HepG2 (cell line): ENCODE measurements at regions of chr18 and their contacts with region 1.

Region 1: GRCh38 chr18:36186911-36187834 is at the start of gene MOCOS:
- DNase-seq: peak; percentile 68
- ATAC-seq: peak; percentile 91
- H3K4me3 ChIP-seq: peak within 1 kb of the TSS; percentile 79 to 86 (median 81)
- H3K27ac ChIP-seq: peak within 1 kb of the TSS; percentile 72
- H3K4me1 ChIP-seq: peaks cover 63% of the 10 kb centered on the region
- H3K27me3 ChIP-seq: no peaks in the 10 kb centered on the region; a peak in 1 of 5 replicates
- CTCF ChIP-seq: peak; percentile 39
- EP300 ChIP-seq: peak in 1 of 2 experiments; percentile 17; a peak in 1 of 4 replicates
- POLR2A ChIP-seq: peak; percentile 83 to 86
- RAD21 ChIP-seq: peak; percentile 69; the same call in 1 of the 2 replicates
- total RNA-seq, gene MOCOS: 15.4 and 20.0 TPM in 2 replicates

Region 2: DNA sequence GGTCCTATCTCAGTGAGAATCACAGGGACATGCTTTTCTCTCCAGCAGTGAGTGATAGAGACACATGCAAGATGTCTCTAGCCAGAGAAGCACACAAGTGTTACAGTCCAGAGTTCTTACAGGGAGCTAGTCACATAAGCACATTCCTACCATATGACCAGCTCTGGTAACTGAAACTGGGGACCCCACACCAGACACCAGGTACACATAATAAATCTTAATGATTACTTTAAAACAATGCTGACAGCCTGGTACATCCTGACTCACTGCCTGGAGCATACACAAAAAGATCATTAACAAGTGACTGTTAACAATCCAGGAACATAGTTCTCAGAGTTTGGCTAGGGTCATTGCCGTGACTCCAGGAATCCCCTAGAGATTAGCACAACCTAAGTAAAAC is 552.0 kb before region 1 on chr18:
- CTCF ChIA-PET with region 1: no interaction called
- POLR2A ChIA-PET with region 1: no interaction called
- in situ Hi-C with region 1: no loop called
- intact Hi-C with region 1: no loop called
- DNase-seq: peak; percentile 4
- ATAC-seq: no peak
- H3K4me3 ChIP-seq: no peak overlapping the region
- H3K27ac ChIP-seq: no peak overlapping the region
- H3K4me1 ChIP-seq: no peaks in the 10 kb centered on the region
- H3K27me3 ChIP-seq: no peaks in the 10 kb centered on the region
- CTCF ChIP-seq: no peak
- EP300 ChIP-seq: no peak
- POLR2A ChIP-seq: no peak
- RAD21 ChIP-seq: no peak

Region 3: DNA sequence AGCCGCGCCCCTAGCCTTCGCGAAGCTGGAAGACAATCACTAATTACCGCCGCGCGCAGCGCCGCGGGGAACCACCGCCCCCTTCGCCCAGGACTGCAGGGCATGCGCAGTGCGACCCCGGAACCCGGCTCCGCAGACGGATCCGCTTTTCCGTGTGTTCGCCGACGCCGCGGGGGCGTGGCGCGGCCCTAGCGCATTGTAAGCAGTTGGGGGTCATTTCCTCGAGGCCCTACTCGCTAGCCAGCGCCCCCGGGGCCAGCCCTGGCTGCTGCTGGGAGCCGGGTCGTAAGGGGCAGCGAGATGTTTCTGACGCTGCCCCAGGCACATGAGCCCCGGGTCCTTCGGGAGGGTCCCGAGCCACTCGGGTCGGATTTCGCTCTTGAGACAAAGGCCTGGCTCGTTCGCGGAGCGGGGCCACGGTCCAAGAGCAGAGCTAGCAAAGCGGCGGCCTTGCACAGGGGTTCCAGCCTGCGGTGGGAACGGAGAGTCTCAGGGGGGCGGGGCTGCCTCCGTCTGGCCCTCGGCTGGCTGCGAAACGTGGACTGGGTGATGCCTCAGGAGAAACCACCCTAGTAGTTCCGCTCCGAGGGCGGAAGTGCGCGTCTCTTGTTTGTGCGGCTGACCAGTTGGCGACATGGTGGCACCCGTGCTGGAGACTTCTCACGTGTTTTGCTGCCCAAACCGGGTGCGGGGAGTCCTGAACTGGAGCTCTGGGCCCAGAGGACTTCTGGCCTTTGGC is 57.7 kb before region 1 on chr18 and contains the starts of genes ELP2 and SLC39A6:
- CTCF ChIA-PET with region 1: no interaction called
- POLR2A ChIA-PET with region 1: interaction called, 42 read pairs
- in situ Hi-C with region 1: no loop called
- intact Hi-C with region 1: loop called (anchors 2 kb)
- DNase-seq: peak; percentile 91
- ATAC-seq: peak; percentile 95
- H3K4me3 ChIP-seq: peak within 1 kb of the TSS; percentile 83 to 87 (median 87)
- H3K27ac ChIP-seq: peak within 1 kb of the TSS; percentile 98
- H3K4me1 ChIP-seq: peaks cover 56% of the 10 kb centered on the region
- H3K27me3 ChIP-seq: no peaks in the 10 kb centered on the region; a peak in 1 of 5 replicates
- CTCF ChIP-seq: no peak
- EP300 ChIP-seq: no peak; a peak in 1 of 4 replicates
- POLR2A ChIP-seq: peak; percentile 91 to 97
- RAD21 ChIP-seq: no peak; the same call in 1 of the 2 replicates
- total RNA-seq, gene ELP2: 100 and 121 TPM in 2 replicates
- total RNA-seq, gene SLC39A6: 30.6 and 41.7 TPM in 2 replicates

Region 4: GRCh38 chr18:36176710-36177109 is 10.5 kb before region 1 on chr18:
- CTCF ChIA-PET with region 1: no interaction called
- POLR2A ChIA-PET with region 1: interaction called, 103 read pairs
- in situ Hi-C with region 1: no loop called
- intact Hi-C with region 1: no loop called
- DNase-seq: no peak
- ATAC-seq: peak; percentile 13
- H3K4me3 ChIP-seq: no peak overlapping the region
- H3K27ac ChIP-seq: peak overlapping the region; percentile 87
- H3K4me1 ChIP-seq: peaks cover 78% of the 10 kb centered on the region
- H3K27me3 ChIP-seq: no peaks in the 10 kb centered on the region; a peak in 1 of 5 replicates
- CTCF ChIP-seq: no peak
- EP300 ChIP-seq: no peak
- POLR2A ChIP-seq: no peak
- RAD21 ChIP-seq: no peak

Region 5: DNA sequence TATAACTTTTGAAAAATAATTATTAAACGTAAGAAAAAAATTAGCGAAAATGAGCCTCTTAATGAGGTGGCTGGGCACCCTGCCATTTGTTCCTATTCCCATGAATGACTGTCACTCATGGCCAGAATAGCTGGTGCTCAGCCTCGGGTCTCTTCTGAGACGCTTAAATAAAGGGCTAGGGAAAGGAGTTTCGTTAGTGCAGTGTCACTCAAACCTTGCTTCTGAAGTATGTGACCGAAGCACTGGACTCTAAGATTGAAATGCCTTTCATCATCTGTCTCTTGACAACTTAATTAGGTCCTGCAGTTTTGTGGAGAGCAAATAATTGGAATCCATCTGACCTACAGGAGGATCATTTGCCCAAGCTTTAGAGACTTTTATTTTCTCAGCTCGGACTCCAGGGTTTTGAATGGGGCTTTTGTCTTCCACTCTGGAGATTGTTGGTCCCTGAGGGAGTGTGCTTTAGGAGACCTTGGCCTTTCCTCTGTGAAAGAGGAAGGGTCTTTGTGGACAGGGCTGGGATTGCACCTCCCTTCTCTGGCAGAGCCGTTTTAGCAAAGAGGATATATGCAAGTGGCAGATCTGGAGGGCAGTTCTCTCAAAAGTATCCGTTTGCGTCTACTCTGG is 68.0 kb after region 1 on chr18:
- CTCF ChIA-PET with region 1: no interaction called
- POLR2A ChIA-PET with region 1: no interaction called
- in situ Hi-C with region 1: no loop called
- intact Hi-C with region 1: loop called (anchors 10 kb)
- DNase-seq: peak; percentile 84
- ATAC-seq: peak; percentile 99
- H3K4me3 ChIP-seq: peak overlapping the region in 1 of 3 experiments; percentile 8; a peak in 1 of 6 replicates
- H3K27ac ChIP-seq: peak overlapping the region; percentile 60
- H3K4me1 ChIP-seq: peaks cover 27% of the 10 kb centered on the region
- H3K27me3 ChIP-seq: no peaks in the 10 kb centered on the region
- CTCF ChIP-seq: no peak
- EP300 ChIP-seq: no peak
- POLR2A ChIP-seq: no peak
- RAD21 ChIP-seq: no peak

Region 6: DNA sequence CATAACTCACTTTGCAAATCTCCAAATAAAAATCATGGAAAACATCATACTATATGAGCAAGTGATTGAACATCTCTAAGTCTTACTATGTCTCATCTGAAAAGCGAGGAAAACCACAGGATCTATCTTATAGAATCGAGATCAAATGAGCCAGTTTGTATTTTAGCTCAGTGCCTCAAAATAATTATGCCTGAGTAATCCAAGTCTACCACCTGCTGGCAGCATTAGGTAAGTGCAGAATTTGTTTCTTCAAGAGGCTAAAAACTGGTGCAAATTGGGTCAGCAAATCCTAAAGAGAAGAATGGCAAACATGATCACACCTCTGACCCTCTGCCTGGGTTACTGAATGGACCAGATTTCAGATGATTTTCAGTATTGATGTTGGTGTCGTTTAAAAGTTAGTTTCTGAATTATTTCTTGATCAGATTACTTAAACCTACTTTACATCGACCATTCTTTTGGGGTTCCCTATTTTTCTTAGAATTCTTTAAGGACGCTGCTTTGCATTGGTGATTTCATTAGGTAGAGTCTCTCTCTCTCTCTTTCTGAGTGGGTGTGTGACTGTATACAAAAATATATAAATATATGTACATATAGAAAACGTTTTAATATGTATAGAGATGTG is 97.6 kb after region 1 on chr18:
- CTCF ChIA-PET with region 1: no interaction called
- POLR2A ChIA-PET with region 1: no interaction called
- in situ Hi-C with region 1: no loop called
- intact Hi-C with region 1: loop called (anchors 2 kb)
- DNase-seq: peak; percentile 62
- ATAC-seq: peak; percentile 53
- H3K4me3 ChIP-seq: no peak overlapping the region
- H3K27ac ChIP-seq: no peak overlapping the region
- H3K4me1 ChIP-seq: 0 out of 2 replicates have a peak, but pooled peaks cover 7% of the 10 kb centered on the region
- H3K27me3 ChIP-seq: no peaks in the 10 kb centered on the region
- CTCF ChIP-seq: peak; percentile 86
- EP300 ChIP-seq: no peak
- POLR2A ChIP-seq: no peak
- RAD21 ChIP-seq: peak; percentile 81

Region 7: DNA sequence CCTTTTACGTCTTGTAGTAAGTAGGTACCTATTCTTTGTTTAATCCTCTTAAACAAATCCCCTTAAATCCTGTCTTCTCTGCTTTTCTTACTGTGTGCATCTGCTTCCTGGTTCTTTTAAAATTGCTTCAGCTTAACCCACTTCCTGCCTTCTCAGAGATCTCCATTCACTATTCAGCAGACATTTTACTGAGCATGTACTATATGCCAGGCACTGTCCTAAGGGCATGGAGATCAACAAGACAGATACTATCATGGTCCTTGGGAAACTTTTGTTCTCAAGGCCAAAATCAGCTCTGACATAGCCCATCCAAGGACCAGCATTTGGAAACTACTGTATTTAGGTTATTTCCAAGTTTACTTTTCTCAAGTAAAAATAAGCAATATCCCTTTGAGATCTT is 414.1 kb after region 1 on chr18:
- CTCF ChIA-PET with region 1: no interaction called
- POLR2A ChIA-PET with region 1: no interaction called
- in situ Hi-C with region 1: no loop called
- intact Hi-C with region 1: no loop called
- DNase-seq: no peak
- ATAC-seq: no peak
- H3K4me3 ChIP-seq: no peak overlapping the region
- H3K27ac ChIP-seq: no peak overlapping the region
- H3K4me1 ChIP-seq: no peaks in the 10 kb centered on the region
- H3K27me3 ChIP-seq: 0 out of 5 replicates have a peak, but pooled peaks cover 0 to 4% of the 10 kb centered on the region in 2 experiments
- CTCF ChIP-seq: no peak
- EP300 ChIP-seq: no peak
- POLR2A ChIP-seq: no peak
- RAD21 ChIP-seq: no peak